Endothelial cell of umbilical vein (primary cell): ENCODE measurements at regions of chr14 and their contacts with region 1.

Region 1: GRCh38 chr14:94681300-94682060 is 69.3 kb downstream of the SERPINA3 start:
- DNase-seq: peak; percentile 14
- H3K4me3 ChIP-seq: no peak overlapping the region
- H3K27ac ChIP-seq: no peak overlapping the region
- H3K4me1 ChIP-seq: no peaks in the 10 kb centered on the region
- H3K27me3 ChIP-seq: no peaks in the 10 kb centered on the region
- CTCF ChIP-seq: peak; percentile 31 to 44
- POLR2A ChIP-seq: no peak

Region 2: GRCh38 chr14:94423453-94424056 is 257.9 kb before region 1 on chr14:
- CTCF ChIA-PET with region 1: interaction called, 4 read pairs
- POLR2A ChIA-PET with region 1: no interaction called
- dilution Hi-C with region 1: no loop called
- intact Hi-C with region 1: loop called (anchors 2 kb)
- DNase-seq: peak; percentile 41
- H3K4me3 ChIP-seq: no peak overlapping the region
- H3K27ac ChIP-seq: no peak overlapping the region
- H3K4me1 ChIP-seq: no peaks in the 10 kb centered on the region
- H3K27me3 ChIP-seq: no peaks in the 10 kb centered on the region
- CTCF ChIP-seq: peak; percentile 64 to 67
- POLR2A ChIP-seq: no peak

Region 3: DNA sequence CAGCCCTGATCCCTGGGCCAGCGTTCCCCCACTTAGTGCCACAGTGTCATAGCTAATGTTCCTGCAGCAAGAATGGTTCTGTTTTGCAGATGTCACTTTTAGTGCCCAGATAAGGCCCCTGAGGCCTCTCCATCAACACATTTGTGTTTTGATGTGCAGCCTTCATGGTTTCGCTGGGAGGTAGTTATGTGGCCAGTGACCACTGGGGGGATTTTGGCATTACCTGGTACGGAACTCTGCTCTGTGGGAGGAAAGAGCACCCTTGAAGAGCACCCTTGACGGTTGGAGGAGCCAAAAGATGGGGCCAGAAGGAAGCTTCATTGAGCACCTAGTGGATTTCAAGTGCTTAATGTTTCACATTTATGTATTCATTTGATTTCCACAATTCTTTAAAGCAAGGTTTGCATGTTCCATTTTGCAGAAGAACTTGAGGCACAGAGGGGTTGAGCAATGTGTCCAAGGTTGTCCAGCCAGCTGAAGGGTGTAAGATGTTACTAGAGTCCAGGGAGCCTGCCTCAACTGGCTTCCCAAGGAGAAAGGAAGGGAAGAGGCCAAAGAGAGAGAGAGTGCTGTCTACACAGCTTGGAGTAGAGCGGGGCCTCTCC is 241.9 kb before region 1 on chr14:
- CTCF ChIA-PET with region 1: no interaction called
- POLR2A ChIA-PET with region 1: no interaction called
- dilution Hi-C with region 1: no loop called
- intact Hi-C with region 1: loop called (anchors 1 kb)
- DNase-seq: no peak
- H3K4me3 ChIP-seq: no peak overlapping the region
- H3K27ac ChIP-seq: no peak overlapping the region
- H3K4me1 ChIP-seq: no peaks in the 10 kb centered on the region
- H3K27me3 ChIP-seq: no peaks in the 10 kb centered on the region
- CTCF ChIP-seq: no peak
- POLR2A ChIP-seq: no peak

Region 4: GRCh38 chr14:94636522-94637412 is 44.7 kb before region 1 on chr14:
- CTCF ChIA-PET with region 1: no interaction called
- POLR2A ChIA-PET with region 1: no interaction called
- dilution Hi-C with region 1: no loop called
- intact Hi-C with region 1: loop called (anchors 2 kb)
- DNase-seq: no peak
- H3K4me3 ChIP-seq: no peak overlapping the region
- H3K27ac ChIP-seq: no peak overlapping the region
- H3K4me1 ChIP-seq: no peaks in the 10 kb centered on the region
- H3K27me3 ChIP-seq: no peaks in the 10 kb centered on the region
- CTCF ChIP-seq: no peak
- POLR2A ChIP-seq: no peak

Region 5: GRCh38 chr14:94654071-94654861 is 27.2 kb before region 1 on chr14:
- CTCF ChIA-PET with region 1: no interaction called
- POLR2A ChIA-PET with region 1: no interaction called
- dilution Hi-C with region 1: no loop called
- intact Hi-C with region 1: no loop called
- DNase-seq: no peak
- H3K4me3 ChIP-seq: no peak overlapping the region
- H3K27ac ChIP-seq: no peak overlapping the region
- H3K4me1 ChIP-seq: no peaks in the 10 kb centered on the region
- H3K27me3 ChIP-seq: no peaks in the 10 kb centered on the region
- CTCF ChIP-seq: no peak
- POLR2A ChIP-seq: no peak

Region 6: GRCh38 chr14:95255487-95255886 is 574.0 kb after region 1 on chr14:
- CTCF ChIA-PET with region 1: no interaction called
- POLR2A ChIA-PET with region 1: no interaction called
- dilution Hi-C with region 1: no loop called
- intact Hi-C with region 1: no loop called
- DNase-seq: peak; percentile 61
- H3K4me3 ChIP-seq: no peak overlapping the region
- H3K27ac ChIP-seq: no peak overlapping the region
- H3K4me1 ChIP-seq: peaks cover 48% of the 10 kb centered on the region
- H3K27me3 ChIP-seq: no peaks in the 10 kb centered on the region
- CTCF ChIP-seq: no peak
- POLR2A ChIP-seq: no peak